Right ventricle myocardium inferior (tissue), 1 donor: ENCODE measurements at regions of chr6 and their contacts with region 1.

Region 1: GRCh38 chr6:168616816-168617765 is 176.1 kb downstream of the SMOC2 start:
- DNase-seq: no peak
- ATAC-seq: peak; percentile 60

Region 2: DNA sequence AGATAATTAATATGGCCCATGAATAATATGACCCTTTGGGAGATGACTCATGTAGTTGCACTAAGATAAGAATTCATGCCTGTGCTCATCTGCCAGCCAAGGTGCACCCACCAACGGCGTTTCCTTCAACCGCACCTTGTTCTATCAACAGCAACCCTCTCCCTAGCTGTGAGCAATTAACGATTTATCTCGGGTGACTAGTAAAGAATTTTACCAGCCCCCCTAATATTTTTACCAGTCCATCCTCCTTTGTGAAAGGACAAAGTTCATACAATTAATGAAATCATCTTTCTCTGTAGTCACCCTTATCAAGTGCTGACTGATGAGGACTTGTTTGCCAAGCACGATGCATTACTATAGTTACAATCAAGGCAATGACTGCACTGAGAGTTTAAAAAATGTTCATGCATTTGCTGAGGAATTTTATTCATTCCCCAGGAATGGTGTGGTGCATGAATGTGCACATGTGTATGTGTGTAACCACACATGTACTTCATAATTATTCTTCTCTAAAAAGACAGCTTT is 57.5 kb before region 1 on chr6:
- intact Hi-C with region 1: no loop called
- DNase-seq: no peak
- ATAC-seq: peak; percentile 51

Region 3: GRCh38 chr6:168658059-168658458 is 41.0 kb after region 1 on chr6:
- intact Hi-C with region 1: no loop called
- DNase-seq: no peak
- ATAC-seq: no peak

Region 4: DNA sequence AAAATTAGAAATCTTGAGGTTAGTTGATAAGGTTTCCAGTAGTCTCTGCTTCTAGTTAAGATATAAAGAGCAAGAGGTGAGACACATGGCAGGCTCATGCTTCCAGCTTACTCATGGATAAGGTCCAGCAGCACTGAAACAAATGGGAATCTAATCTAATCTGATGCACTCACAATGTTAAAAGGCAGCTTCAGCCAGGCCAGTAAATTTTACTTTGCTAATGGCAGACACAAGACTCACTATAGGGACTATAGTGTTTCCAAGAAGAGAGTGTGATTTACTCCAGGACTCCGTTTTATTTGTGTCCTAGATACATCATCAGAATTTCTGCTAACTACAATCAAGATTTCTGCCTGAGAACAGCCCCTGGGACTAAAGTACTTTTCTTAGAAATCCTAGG is 148.7 kb after region 1 on chr6:
- intact Hi-C with region 1: no loop called
- DNase-seq: no peak
- ATAC-seq: no peak

Region 5: DNA sequence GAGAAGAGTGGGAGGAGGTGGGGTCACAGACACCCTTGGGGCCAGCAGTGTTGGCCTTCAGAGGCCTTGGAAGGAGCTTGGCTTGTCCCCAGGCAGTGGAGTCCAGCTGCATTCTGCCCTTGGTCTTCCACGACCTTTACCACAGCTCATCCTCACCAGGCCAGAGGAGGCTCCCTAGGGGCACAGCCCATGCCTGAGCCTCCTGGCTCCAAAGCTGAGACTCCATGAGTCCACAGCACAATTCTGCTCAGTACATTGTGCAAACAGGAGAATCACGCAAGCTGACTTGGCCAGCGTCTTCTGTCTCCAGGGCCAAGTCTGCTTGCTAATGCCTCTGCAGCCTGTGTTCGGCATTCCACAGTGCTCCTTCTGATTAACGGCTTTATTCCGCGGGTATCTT is 161.1 kb after region 1 on chr6:
- intact Hi-C with region 1: no loop called
- DNase-seq: peak; percentile 80
- ATAC-seq: peak; percentile 95

Region 6: DNA sequence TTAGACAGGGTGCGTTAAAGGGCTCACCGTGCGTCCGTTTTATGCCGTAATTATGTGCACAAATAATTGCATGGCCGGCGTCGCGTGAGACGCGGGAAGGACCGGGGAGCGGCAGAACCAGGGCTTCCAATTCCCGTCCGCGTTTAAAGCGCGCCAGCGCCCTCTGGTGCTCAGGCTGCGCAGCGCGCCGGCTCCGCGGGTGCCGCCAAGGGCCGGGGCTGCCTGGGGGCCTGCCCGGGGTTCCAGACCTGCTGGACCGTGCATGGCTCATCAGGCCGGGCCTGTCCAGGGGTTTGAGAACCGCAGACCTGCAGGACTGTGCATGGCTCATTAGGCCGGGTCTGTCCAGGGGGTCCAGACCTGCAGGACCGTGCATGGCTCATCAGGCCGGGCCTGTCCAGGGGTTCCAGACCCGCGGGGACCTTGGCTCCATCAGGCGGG is 267.6 kb after region 1 on chr6:
- intact Hi-C with region 1: loop called (anchors 1 kb)
- DNase-seq: peak; percentile 80
- ATAC-seq: peak; percentile 87